Vagina (tissue), 2 donors: ENCODE measurements at regions of chr22 and their contacts with region 1.

Region 1: GRCh38 chr22:49936018-49936952 is 17.9 kb downstream of the CRELD2 start:
- DNase-seq: no peak
- H3K4me3 ChIP-seq: peak overlapping the region; percentile 47 to 67
- H3K27ac ChIP-seq: peak overlapping the region; percentile 98
- H3K4me1 ChIP-seq: peaks cover 55% of the 10 kb centered on the region
- H3K27me3 ChIP-seq: no peaks in the 10 kb centered on the region
- CTCF ChIP-seq: no peak
- POLR2A ChIP-seq: peak in 1 of 2 donors; percentile 47

Region 2: GRCh38 chr22:49838771-49839717 is 97.2 kb before region 1 on chr22:
- intact Hi-C with region 1: no loop called
- DNase-seq: no peak
- H3K4me3 ChIP-seq: no peak overlapping the region
- H3K27ac ChIP-seq: no peak overlapping the region
- H3K4me1 ChIP-seq: no peaks in the 10 kb centered on the region
- H3K27me3 ChIP-seq: no peaks in the 10 kb centered on the region
- CTCF ChIP-seq: no peak
- POLR2A ChIP-seq: no peak

Region 3: GRCh38 chr22:49960159-49961004 is 24.1 kb after region 1 on chr22 and contains the start of gene PIM3:
- intact Hi-C with region 1: loop called (anchors 2 kb)
- DNase-seq: no peak
- H3K4me3 ChIP-seq: peak within 1 kb of the TSS; percentile 76 to 100
- H3K27ac ChIP-seq: peak within 1 kb of the TSS; percentile 89
- H3K4me1 ChIP-seq: peaks cover 40% of the 10 kb centered on the region
- H3K27me3 ChIP-seq: no peaks in the 10 kb centered on the region
- CTCF ChIP-seq: no peak
- POLR2A ChIP-seq: peak in 1 of 2 donors; percentile 95
- total RNA-seq, gene PIM3: 97.2 TPM

Region 4: GRCh38 chr22:49970528-49971231 is 34.4 kb after region 1 on chr22:
- intact Hi-C with region 1: loop called (anchors 5 kb)
- DNase-seq: peak in 1 of 2 donors; percentile 98
- H3K4me3 ChIP-seq: peak overlapping the region; percentile 51 to 68
- H3K27ac ChIP-seq: peak overlapping the region; percentile 89
- H3K4me1 ChIP-seq: peaks cover 59% of the 10 kb centered on the region
- H3K27me3 ChIP-seq: no peaks in the 10 kb centered on the region
- CTCF ChIP-seq: no peak
- POLR2A ChIP-seq: peak in 1 of 2 donors; percentile 86

Region 5: GRCh38 chr22:50129121-50129736 is 192.9 kb after region 1 on chr22:
- intact Hi-C with region 1: no loop called
- DNase-seq: no peak
- H3K4me3 ChIP-seq: no peak overlapping the region
- H3K27ac ChIP-seq: no peak overlapping the region
- H3K4me1 ChIP-seq: no peaks in the 10 kb centered on the region
- H3K27me3 ChIP-seq: no peaks in the 10 kb centered on the region
- CTCF ChIP-seq: no peak
- POLR2A ChIP-seq: no peak

Region 6: GRCh38 chr22:50507991-50508884 is 572.0 kb after region 1 on chr22 and contains the start of gene NCAPH2:
- intact Hi-C with region 1: loop called (anchors 5 kb)
- DNase-seq: no peak
- H3K4me3 ChIP-seq: peak within 1 kb of the TSS; percentile 76 to 98
- H3K27ac ChIP-seq: peak within 1 kb of the TSS; percentile 90
- H3K4me1 ChIP-seq: peaks cover 49% of the 10 kb centered on the region
- H3K27me3 ChIP-seq: no peaks in the 10 kb centered on the region
- CTCF ChIP-seq: no peak
- POLR2A ChIP-seq: peak in 1 of 2 donors; percentile 82
- total RNA-seq, gene NCAPH2: 45.7 TPM